Dendritic cell treated with granulocyte-macrophage colony-stimulating factor and Interleukin-4, amounts not matched to agents 40 ng/mL and 50 ng/mL, for 4 days (primary cell): ENCODE measurements at regions of chr4 and their contacts with region 1.

Region 1: DNA sequence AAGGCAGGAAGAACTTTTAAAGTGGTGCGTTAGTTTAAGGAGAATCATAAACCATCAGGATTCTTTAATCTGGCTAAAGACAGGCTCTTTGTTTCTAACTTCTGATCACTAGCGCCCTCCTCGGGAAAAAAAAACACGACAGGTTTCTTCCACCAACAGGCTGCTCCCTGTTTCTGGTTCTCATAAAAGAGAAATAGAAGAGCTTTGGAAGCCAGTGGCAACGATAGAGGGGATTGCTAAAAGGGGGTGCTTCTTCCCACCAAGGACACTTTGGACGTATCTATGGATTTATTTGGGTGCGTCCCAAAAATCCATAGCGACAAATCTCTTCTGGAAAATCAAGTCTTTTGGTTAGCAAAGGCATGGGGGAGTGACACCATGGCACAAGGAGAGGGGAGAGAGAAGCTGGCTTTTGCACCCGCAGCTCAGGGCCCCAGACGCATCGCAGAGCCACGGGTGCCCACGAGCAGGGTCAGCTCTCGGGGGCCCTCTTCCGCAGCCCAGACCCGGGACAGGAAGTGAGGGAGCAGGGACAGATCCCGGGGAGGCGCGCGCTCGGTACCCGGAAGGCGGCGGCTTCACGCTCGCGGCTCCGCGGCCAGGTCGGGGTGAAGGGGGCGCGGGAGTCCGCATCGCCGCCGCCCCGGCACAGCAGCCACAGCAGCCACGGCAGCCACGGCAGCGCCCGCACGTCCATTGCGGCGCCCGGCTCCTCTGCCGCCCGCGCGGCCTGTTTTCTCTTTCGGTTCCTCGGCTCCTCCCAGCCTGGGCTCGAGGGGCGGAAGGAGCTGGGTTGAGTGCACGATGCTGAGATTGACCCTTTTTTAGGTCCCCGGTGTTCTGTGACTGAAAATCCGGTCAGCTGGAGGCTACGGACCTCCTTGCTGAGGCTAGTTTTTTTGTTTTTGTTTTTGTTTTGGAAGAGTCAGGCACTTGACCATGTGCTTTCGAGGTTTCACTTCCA is at the start of gene CTSO:
- H3K4me3 Mint-ChIP-seq: peak within 1 kb of the TSS; percentile 90
- H3K27ac Mint-ChIP-seq: peak within 1 kb of the TSS; percentile 92
- H3K4me1 Mint-ChIP-seq: peaks cover 5% of the 10 kb centered on the region
- H3K27me3 Mint-ChIP-seq: no peaks in the 10 kb centered on the region

Region 2: DNA sequence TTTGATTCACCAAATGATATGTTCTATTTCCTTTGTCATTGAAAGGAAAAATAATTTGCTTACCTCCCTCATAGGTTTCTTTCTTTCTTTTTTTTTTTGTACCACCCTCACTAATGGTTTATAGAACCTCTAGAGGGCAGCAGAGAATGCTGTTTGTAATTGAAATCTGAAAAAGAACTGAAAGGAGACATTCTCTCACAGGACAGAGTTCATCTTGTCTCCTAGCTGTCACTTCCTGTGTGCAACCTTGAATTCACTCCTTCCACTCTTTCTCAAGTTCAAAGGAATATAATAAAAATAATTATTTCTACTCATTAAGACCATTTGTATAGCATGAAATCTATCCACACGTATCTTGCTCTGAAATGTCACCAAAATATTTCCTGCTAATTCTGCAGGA is 143.6 kb before region 1 on chr4:
- intact Hi-C with region 1: loop called (anchors 2 kb)
- H3K4me3 Mint-ChIP-seq: no peak overlapping the region
- H3K27ac Mint-ChIP-seq: no peak overlapping the region
- H3K4me1 Mint-ChIP-seq: no peaks in the 10 kb centered on the region
- H3K27me3 Mint-ChIP-seq: no peaks in the 10 kb centered on the region

Region 3: GRCh38 chr4:157204634-157205244 is 1251.3 kb after region 1 on chr4:
- intact Hi-C with region 1: loop called (anchors 5 kb)
- H3K4me3 Mint-ChIP-seq: no peak overlapping the region
- H3K27ac Mint-ChIP-seq: no peak overlapping the region
- H3K4me1 Mint-ChIP-seq: no peaks in the 10 kb centered on the region
- H3K27me3 Mint-ChIP-seq: no peaks in the 10 kb centered on the region